HepG2 (cell line): ENCODE measurements at regions of chr11 and their contacts with region 1.

Region 1: GRCh38 chr11:92886243-92886905 is 83.1 kb upstream of the MTNR1B start:
- DNase-seq: peak; percentile 54
- ATAC-seq: peak; percentile 97
- H3K4me3 ChIP-seq: no peak overlapping the region
- H3K27ac ChIP-seq: no peak overlapping the region
- H3K4me1 ChIP-seq: no peaks in the 10 kb centered on the region
- H3K27me3 ChIP-seq: no peaks in the 10 kb centered on the region
- CTCF ChIP-seq: peak; percentile 82
- EP300 ChIP-seq: no peak
- POLR2A ChIP-seq: no peak
- RAD21 ChIP-seq: peak; percentile 58; the same call in 1 of the 2 replicates

Region 2: GRCh38 chr11:92152245-92152644 is 734.1 kb before region 1 on chr11:
- CTCF ChIA-PET with region 1: no interaction called
- POLR2A ChIA-PET with region 1: no interaction called
- in situ Hi-C with region 1: no loop called
- intact Hi-C with region 1: loop called (anchors 10 kb)
- DNase-seq: peak; percentile 12
- ATAC-seq: peak; percentile 87
- H3K4me3 ChIP-seq: no peak overlapping the region
- H3K27ac ChIP-seq: no peak overlapping the region
- H3K4me1 ChIP-seq: no peaks in the 10 kb centered on the region
- H3K27me3 ChIP-seq: no peaks in the 10 kb centered on the region
- CTCF ChIP-seq: peak; percentile 42
- EP300 ChIP-seq: no peak
- POLR2A ChIP-seq: no peak
- RAD21 ChIP-seq: no peak

Region 3: DNA sequence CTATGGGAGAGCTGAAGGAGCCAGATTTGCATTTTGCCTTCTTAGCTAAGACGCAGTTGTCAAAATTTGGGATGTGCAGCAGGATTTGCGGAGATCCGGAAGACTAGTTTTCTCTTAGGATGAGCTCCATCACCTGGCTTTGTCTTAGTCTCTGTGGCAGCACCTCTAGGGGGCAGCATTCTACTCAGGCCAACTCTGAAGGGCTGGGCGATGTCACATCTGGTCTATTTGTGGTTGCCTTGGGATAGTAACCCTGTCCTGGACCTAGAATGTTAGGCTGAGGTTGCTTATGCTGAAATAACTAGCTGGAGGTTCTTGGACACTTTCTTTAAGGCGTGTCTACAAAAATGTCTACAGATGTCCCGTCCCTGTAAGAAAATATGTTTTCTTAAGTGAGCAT is 545.5 kb before region 1 on chr11:
- CTCF ChIA-PET with region 1: interaction called, 5 read pairs
- POLR2A ChIA-PET with region 1: no interaction called
- in situ Hi-C with region 1: no loop called
- intact Hi-C with region 1: loop called (anchors 2 kb)
- DNase-seq: peak; percentile 6
- ATAC-seq: peak; percentile 86
- H3K4me3 ChIP-seq: no peak overlapping the region
- H3K27ac ChIP-seq: no peak overlapping the region
- H3K4me1 ChIP-seq: no peaks in the 10 kb centered on the region
- H3K27me3 ChIP-seq: no peaks in the 10 kb centered on the region
- CTCF ChIP-seq: peak; percentile 56
- EP300 ChIP-seq: no peak
- POLR2A ChIP-seq: no peak
- RAD21 ChIP-seq: no peak

Region 4: GRCh38 chr11:92540096-92540495 is 346.3 kb before region 1 on chr11:
- CTCF ChIA-PET with region 1: no interaction called
- POLR2A ChIA-PET with region 1: no interaction called
- in situ Hi-C with region 1: no loop called
- intact Hi-C with region 1: no loop called
- DNase-seq: no peak
- ATAC-seq: no peak
- H3K4me3 ChIP-seq: no peak overlapping the region
- H3K27ac ChIP-seq: no peak overlapping the region
- H3K4me1 ChIP-seq: no peaks in the 10 kb centered on the region
- H3K27me3 ChIP-seq: no peaks in the 10 kb centered on the region
- CTCF ChIP-seq: no peak
- EP300 ChIP-seq: no peak
- POLR2A ChIP-seq: no peak
- RAD21 ChIP-seq: no peak

Region 5: DNA sequence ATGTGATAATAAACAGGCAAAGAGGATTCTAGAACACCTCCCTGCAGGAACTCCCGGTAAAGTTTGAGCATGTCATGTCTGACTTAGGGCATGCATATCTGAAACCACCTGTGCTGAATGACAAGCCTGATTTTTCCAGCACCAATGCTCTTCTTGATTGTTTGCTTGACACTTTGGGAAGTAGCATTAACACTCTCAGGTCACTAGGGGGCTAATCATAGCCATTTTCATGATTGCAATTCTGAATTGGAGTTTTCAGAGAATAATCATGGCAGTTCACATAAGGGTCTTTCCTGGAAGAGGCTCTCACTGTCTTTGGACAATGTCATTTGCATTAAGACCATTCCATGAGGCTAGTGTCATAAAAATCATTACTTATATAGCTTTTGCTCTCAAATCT is 151.3 kb before region 1 on chr11:
- CTCF ChIA-PET with region 1: no interaction called
- POLR2A ChIA-PET with region 1: no interaction called
- in situ Hi-C with region 1: no loop called
- intact Hi-C with region 1: loop called (anchors 5 kb)
- DNase-seq: no peak
- ATAC-seq: no peak
- H3K4me3 ChIP-seq: no peak overlapping the region
- H3K27ac ChIP-seq: no peak overlapping the region
- H3K4me1 ChIP-seq: no peaks in the 10 kb centered on the region
- H3K27me3 ChIP-seq: no peaks in the 10 kb centered on the region
- CTCF ChIP-seq: no peak
- EP300 ChIP-seq: no peak
- POLR2A ChIP-seq: no peak
- RAD21 ChIP-seq: no peak